Activated CD4-positive, alpha-beta memory T cell treated with anti-CD3 and anti-CD28 coated beads for 36 hours (primary cell): ENCODE measurements at regions of chr11 and their contacts with region 1.

Region 1: GRCh38 chr11:68459886-68460740 is 439 bp upstream of the PPP6R3 start:
- DNase-seq: peak; percentile 98
- H3K4me3 Mint-ChIP-seq: peak overlapping the region; percentile 88
- H3K27ac Mint-ChIP-seq: peak overlapping the region; percentile 91
- H3K4me1 Mint-ChIP-seq: peaks cover 28% of the 10 kb centered on the region
- H3K27me3 Mint-ChIP-seq: no peaks in the 10 kb centered on the region

Region 2: GRCh38 chr11:68271781-68272608 is 188.1 kb before region 1 on chr11 and contains the start of gene C11orf24:
- CTCF ChIA-PET with region 1: interaction called, 3 read pairs
- POLR2A ChIA-PET with region 1: interaction called, 3 read pairs
- intact Hi-C with region 1: loop called (anchors 5 kb)
- DNase-seq: peak; percentile 95
- H3K4me3 Mint-ChIP-seq: peak within 1 kb of the TSS; percentile 97
- H3K27ac Mint-ChIP-seq: peak within 1 kb of the TSS; percentile 93
- H3K4me1 Mint-ChIP-seq: peaks cover 24% of the 10 kb centered on the region
- H3K27me3 Mint-ChIP-seq: no peaks in the 10 kb centered on the region
- total RNA-seq, gene C11orf24: 28.0 to 28.9 TPM

Region 3: DNA sequence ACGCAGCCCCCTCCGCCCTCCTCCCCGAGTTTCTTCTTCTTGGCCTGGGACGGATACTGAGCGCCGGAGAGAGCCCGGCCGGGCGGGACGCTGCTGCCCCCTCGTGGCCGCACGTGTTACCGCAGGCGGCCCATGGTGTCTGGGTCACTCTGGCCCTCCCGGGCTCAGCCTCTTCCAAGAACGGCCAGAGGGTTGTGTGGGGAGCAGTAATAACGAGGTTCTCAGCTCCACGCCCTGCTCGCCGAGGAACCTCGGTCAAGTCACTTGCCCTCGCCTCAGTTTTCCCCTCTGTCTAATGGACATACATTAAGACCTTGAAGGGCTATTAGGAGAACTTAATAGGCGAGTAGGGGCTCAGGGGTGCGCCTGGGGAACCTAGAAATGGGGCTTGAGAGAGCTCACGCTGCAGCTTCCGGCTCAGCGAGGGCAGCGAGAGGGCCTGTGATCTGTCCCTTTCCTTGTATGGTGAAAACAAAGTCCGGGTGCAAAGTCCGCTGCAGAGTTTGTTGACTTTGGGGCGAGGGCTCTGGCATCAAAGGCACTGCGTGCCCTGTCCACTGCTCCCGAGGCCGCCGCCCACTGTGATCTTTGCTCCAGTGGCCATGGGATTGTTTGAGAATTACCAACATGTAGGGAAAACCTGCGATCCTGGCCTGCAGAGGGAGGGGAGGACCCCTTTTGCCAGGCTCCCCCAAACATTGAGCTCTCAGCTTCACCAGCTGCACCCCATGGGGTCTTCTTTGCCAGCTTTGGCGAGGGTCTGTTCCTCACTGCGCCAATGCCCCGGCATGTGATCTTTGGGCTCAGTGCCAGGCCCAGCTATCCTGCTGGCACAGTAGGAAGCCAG is 162.1 kb before region 1 on chr11:
- CTCF ChIA-PET with region 1: no interaction called
- POLR2A ChIA-PET with region 1: no interaction called
- intact Hi-C with region 1: no loop called
- DNase-seq: peak; percentile 81
- H3K4me3 Mint-ChIP-seq: no peak overlapping the region
- H3K27ac Mint-ChIP-seq: no peak overlapping the region
- H3K4me1 Mint-ChIP-seq: no peaks in the 10 kb centered on the region
- H3K27me3 Mint-ChIP-seq: peaks cover 1% of the 10 kb centered on the region

Region 4: DNA sequence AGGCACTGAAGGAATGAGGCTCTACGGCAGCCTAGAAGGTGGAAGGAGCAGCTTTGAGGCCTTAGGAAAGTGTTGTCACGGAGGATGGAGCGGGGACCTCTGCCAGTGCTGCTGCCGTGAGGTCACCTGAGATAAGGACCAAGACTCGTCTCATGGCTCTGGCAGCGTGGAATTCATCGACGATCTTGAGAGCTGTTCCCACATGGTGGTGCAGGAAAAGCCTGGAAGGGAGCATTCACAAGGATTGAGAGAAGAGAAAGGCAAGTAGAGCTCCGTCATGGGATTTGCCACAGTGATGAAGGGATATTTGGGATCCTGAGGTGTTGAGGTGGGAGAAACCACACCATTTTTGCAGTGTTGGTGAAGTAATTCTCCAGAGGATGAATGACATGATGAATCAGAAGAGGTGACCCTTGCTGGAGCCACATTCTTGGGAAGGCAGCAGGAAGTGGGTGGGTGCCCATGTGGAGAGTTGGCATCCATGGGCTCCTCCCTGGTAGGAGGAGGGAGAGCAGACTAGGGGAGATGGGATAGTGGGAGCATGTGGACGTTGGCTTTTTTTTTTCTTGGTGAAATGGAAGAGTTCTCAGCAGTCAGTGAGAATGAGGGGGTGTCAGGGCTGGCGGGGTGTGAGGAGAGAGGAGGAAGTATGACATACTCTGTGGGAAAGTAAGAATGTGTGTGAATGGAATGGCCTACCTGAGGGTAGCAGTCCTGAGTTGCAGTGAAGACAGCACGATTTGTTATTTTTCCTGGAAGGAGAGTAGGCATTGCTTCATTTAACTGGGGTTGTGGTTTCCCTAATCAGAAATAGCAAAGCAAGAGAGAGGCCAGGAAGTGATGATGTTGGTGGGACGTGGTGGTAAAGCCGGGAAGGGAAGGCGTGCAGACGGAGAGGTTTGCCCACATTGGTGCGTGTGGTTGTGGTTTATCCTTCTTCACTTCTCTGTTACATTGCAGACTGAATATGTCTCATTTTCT is 11.5 kb after region 1 on chr11:
- CTCF ChIA-PET with region 1: no interaction called
- POLR2A ChIA-PET with region 1: interaction called, 4 read pairs
- intact Hi-C with region 1: loop called (anchors 1 kb)
- DNase-seq: peak; percentile 87
- H3K4me3 Mint-ChIP-seq: peak overlapping the region; percentile 45
- H3K27ac Mint-ChIP-seq: peak overlapping the region; percentile 90
- H3K4me1 Mint-ChIP-seq: peaks cover 75% of the 10 kb centered on the region
- H3K27me3 Mint-ChIP-seq: no peaks in the 10 kb centered on the region

Region 5: GRCh38 chr11:68481579-68482240 is 21.6 kb after region 1 on chr11:
- CTCF ChIA-PET with region 1: no interaction called
- POLR2A ChIA-PET with region 1: no interaction called
- intact Hi-C with region 1: no loop called
- DNase-seq: no peak
- H3K4me3 Mint-ChIP-seq: no peak overlapping the region
- H3K27ac Mint-ChIP-seq: no peak overlapping the region
- H3K4me1 Mint-ChIP-seq: peaks cover 70% of the 10 kb centered on the region
- H3K27me3 Mint-ChIP-seq: no peaks in the 10 kb centered on the region

Region 6: DNA sequence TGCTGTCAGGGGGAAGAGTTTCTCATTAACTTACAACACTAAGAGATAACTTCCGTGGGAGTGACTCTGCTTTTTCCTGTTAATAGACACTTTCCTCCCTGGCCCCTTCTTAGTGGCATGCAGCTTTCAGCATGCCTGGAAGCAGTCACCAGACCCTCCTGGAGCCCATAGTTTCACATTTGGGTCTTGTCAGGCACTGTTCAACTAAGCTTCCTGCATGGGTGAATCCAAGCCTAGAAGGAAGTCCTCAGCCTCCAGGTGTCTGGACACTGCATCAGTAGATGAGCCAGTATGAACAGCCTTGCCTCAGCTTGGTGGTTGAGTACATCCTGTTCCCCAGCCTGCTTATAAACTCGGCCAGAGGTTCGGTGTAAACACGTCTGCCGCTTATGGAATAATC is 68.5 kb after region 1 on chr11:
- CTCF ChIA-PET with region 1: no interaction called
- POLR2A ChIA-PET with region 1: no interaction called
- intact Hi-C with region 1: loop called (anchors 5 kb)
- DNase-seq: no peak
- H3K4me3 Mint-ChIP-seq: no peak overlapping the region
- H3K27ac Mint-ChIP-seq: peak overlapping the region; percentile 73
- H3K4me1 Mint-ChIP-seq: peaks cover 72% of the 10 kb centered on the region
- H3K27me3 Mint-ChIP-seq: no peaks in the 10 kb centered on the region

Region 7: DNA sequence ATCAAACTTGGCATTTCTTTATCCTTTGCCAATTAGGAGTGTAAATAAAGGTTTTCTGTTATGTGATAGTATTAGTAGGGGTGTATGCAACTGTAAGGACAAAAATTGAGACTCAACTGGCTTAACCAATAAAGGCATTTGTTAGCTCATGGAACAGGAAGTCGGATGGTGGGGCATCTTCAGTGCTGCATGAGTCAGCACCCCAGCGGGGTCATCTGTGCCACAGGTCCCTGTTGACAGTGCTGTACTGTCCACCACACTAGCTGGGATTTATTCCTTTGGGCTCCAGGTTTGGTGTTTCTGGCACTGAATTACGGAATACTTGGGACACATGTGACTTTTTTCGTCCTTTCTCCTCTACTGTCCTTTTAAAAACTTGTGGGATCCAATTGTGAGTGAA is 86.4 kb after region 1 on chr11:
- CTCF ChIA-PET with region 1: no interaction called
- POLR2A ChIA-PET with region 1: no interaction called
- intact Hi-C with region 1: loop called (anchors 5 kb)
- DNase-seq: no peak
- H3K4me3 Mint-ChIP-seq: no peak overlapping the region
- H3K27ac Mint-ChIP-seq: peak overlapping the region; percentile 83
- H3K4me1 Mint-ChIP-seq: peaks cover 85% of the 10 kb centered on the region
- H3K27me3 Mint-ChIP-seq: no peaks in the 10 kb centered on the region

Region 8: GRCh38 chr11:68584097-68584496 is 124.0 kb after region 1 on chr11:
- CTCF ChIA-PET with region 1: no interaction called
- POLR2A ChIA-PET with region 1: no interaction called
- intact Hi-C with region 1: loop called (anchors 10 kb)
- DNase-seq: peak; percentile 73
- H3K4me3 Mint-ChIP-seq: no peak overlapping the region
- H3K27ac Mint-ChIP-seq: no peak overlapping the region
- H3K4me1 Mint-ChIP-seq: peaks cover 19% of the 10 kb centered on the region
- H3K27me3 Mint-ChIP-seq: no peaks in the 10 kb centered on the region